PC-3 (cell line): ENCODE measurements at regions of chr5 and their contacts with region 1.

Region 1: DNA sequence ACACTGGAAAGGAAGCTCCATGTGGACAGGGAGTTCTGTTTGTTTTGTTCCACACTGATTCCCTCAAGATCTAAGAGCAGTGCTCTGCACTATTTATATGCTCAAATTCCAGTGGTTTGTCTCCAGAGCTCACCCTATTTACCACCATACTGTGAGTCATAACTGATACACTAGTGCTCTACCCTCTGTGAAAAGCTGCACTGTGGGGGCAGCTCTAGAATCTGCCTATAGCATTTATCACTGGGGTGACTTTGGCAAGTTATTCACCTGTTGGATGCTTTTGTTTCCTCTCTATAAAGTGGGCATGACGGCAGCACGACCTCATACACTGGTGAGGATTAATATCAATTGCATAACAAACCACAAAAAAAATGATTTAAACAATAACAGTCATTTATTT is 307.8 kb downstream of the NR2F1-AS1 start:
- DNase-seq: peak; percentile 83
- ATAC-seq: peak; percentile 95
- H3K4me3 ChIP-seq: no peak overlapping the region
- H3K27ac ChIP-seq: peak overlapping the region; percentile 71
- H3K4me1 ChIP-seq: peaks cover 33% of the 10 kb centered on the region
- H3K27me3 ChIP-seq: no peaks in the 10 kb centered on the region
- CTCF ChIP-seq: no peak

Region 2: GRCh38 chr5:93285461-93285860 is 12.3 kb after region 1 on chr5:
- CTCF ChIA-PET with region 1: no interaction called
- POLR2A ChIA-PET with region 1: no interaction called
- intact Hi-C with region 1: no loop called
- DNase-seq: peak; percentile 33
- ATAC-seq: peak; percentile 38
- H3K4me3 ChIP-seq: no peak overlapping the region
- H3K27ac ChIP-seq: peak overlapping the region; percentile 0; the same call in 1 of the 2 replicates
- H3K4me1 ChIP-seq: peaks cover 17% of the 10 kb centered on the region
- H3K27me3 ChIP-seq: no peaks in the 10 kb centered on the region
- CTCF ChIP-seq: no peak

Region 3: GRCh38 chr5:93831449-93831848 is 558.3 kb after region 1 on chr5:
- CTCF ChIA-PET with region 1: no interaction called
- POLR2A ChIA-PET with region 1: interaction called, 10 read pairs
- intact Hi-C with region 1: no loop called
- DNase-seq: peak; percentile 91
- ATAC-seq: peak; percentile 99
- H3K4me3 ChIP-seq: no peak overlapping the region
- H3K27ac ChIP-seq: peak overlapping the region; percentile 25
- H3K4me1 ChIP-seq: peaks cover 12% of the 10 kb centered on the region
- H3K27me3 ChIP-seq: no peaks in the 10 kb centered on the region
- CTCF ChIP-seq: peak; percentile 37; the same call in 1 of the 2 replicates